WTC11 (cell line): ENCODE measurements at regions of chr9 and their contacts with region 1.

Region 1: DNA sequence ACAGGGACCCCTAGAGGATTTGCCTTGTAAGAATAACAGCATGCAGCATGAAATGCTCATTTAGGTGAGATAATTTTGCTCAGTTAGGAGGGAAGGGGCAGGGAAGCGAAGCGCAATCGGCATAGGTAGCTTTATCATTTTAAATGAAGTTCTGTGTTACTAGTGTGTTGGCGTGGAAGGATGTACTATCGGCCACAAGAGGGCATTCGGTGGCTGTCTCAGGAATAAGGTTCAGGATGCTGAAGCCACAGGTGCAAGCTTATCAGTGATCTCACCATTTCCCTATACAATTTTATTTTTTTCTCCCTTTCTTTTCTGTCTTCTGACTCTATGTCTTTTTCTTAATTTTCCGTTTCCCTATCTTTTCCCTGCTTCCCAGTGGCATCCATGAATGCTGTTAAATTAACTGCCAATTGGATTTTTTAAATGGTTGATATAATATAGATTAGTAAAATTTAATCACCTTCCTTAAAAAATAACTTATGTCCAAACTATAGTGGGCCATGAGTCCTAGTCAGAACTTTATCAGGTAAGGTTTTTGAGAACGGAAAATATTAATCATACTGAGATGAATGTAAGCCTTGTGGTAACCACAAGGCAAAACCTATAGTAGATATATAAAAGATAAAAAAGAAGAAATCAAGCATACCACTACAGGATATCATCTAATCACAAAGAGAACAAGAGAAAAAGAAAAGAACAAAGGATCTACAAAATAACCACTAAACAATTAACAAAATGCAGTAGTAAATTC is 1.2 kb upstream of the INSL6 start:
- DNase-seq: peak; percentile 56
- ATAC-seq: peak; percentile 88
- H3K4me3 Mint-ChIP-seq: no peak overlapping the region
- H3K27ac Mint-ChIP-seq: no peak overlapping the region
- H3K4me1 Mint-ChIP-seq: peaks cover 11% of the 10 kb centered on the region
- H3K27me3 Mint-ChIP-seq: no peaks in the 10 kb centered on the region; the same call in 1 of the 2 replicates
- CTCF ChIP-seq: peak; percentile 63

Region 2: DNA sequence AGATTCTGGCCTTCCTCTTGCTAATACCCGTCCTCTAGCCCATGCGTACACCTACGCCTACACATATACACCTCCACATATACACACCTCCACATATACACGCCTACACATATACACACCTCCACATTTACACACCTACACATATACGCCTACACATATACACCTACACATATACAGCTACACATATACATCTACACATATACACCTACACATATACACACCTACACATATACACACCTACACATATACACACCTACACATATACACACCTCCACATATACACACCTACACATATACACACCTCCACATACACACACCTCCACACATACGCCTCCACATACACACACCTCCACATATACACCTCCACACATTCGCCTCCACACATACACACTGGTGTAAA is 472.7 kb before region 1 on chr9:
- CTCF ChIA-PET with region 1: no interaction called
- POLR2A ChIA-PET with region 1: no interaction called
- DNase-seq: no peak
- ATAC-seq: no peak
- H3K4me3 Mint-ChIP-seq: no peak overlapping the region
- H3K27ac Mint-ChIP-seq: no peak overlapping the region; the same call in 1 of the 2 replicates
- H3K4me1 Mint-ChIP-seq: no peaks in the 10 kb centered on the region
- H3K27me3 Mint-ChIP-seq: no peaks in the 10 kb centered on the region
- CTCF ChIP-seq: no peak

Region 3: DNA sequence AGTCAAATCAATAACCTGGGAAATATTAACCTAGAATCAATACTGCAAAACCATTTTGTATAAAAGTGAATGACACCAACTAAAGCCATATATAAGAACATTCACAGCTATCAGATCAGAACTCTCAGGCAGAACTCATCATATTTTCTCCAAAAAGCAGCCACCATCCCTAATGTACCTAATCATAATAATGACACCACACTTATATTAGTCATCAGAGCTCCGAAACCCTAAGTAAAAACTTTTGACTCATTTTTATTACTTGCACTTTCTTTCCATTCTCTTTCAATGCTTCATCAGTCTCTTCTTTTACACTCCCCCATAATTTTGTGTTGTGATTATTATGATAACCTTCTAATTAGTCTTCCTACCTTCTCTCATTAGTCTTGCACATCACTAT is 46.4 kb before region 1 on chr9:
- CTCF ChIA-PET with region 1: no interaction called
- POLR2A ChIA-PET with region 1: no interaction called
- DNase-seq: no peak
- ATAC-seq: no peak
- H3K4me3 Mint-ChIP-seq: no peak overlapping the region
- H3K27ac Mint-ChIP-seq: no peak overlapping the region
- H3K4me1 Mint-ChIP-seq: no peaks in the 10 kb centered on the region
- H3K27me3 Mint-ChIP-seq: peaks cover 14% of the 10 kb centered on the region; the same call in 1 of the 2 replicates
- CTCF ChIP-seq: no peak

Region 4: GRCh38 chr9:5268890-5269715 is 82.5 kb after region 1 on chr9:
- CTCF ChIA-PET with region 1: interaction called, 10 read pairs
- POLR2A ChIA-PET with region 1: no interaction called
- DNase-seq: no peak
- ATAC-seq: peak; percentile 83
- H3K4me3 Mint-ChIP-seq: peak overlapping the region; percentile 18
- H3K27ac Mint-ChIP-seq: peak overlapping the region; percentile 95
- H3K4me1 Mint-ChIP-seq: peaks cover 29% of the 10 kb centered on the region
- H3K27me3 Mint-ChIP-seq: peaks cover 7% of the 10 kb centered on the region
- CTCF ChIP-seq: no peak

Region 5: DNA sequence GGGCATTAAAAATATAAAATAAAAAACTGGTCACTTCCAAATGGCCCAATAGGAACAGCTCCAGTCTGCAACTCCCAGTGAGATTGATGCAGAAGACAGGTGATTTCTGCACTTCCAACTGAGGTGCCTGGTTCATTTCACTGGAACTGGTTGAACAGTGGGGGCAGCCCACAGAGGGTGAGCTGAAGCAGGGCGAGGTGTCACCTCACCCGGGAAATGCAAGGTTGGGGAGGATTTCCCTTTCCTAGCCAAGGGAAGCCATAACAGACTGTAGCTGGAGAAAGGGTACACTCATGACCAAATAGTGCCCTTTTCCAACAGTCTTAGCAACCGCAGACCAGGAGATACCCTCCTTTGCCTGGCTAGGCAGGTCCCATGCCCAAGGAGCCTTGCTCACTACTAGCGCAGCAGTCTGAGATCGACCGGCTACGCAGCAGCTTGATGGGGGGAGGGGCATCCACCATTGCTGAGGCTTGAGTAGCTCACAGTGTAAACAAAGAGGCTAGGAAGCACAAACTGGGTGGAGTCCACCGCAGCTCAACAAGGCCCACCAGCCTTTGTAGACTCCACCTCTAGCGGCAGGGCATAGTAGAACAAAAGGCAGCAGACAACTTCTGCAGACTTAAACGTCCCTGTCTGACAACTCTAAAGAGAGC is 140.4 kb after region 1 on chr9:
- CTCF ChIA-PET with region 1: interaction called, 14 read pairs
- POLR2A ChIA-PET with region 1: no interaction called
- DNase-seq: peak; percentile 79
- ATAC-seq: peak; percentile 99
- H3K4me3 Mint-ChIP-seq: peak overlapping the region; percentile 39
- H3K27ac Mint-ChIP-seq: peak overlapping the region; percentile 53; the same call in 1 of the 2 replicates
- H3K4me1 Mint-ChIP-seq: peaks cover 17% of the 10 kb centered on the region
- H3K27me3 Mint-ChIP-seq: no peaks in the 10 kb centered on the region
- CTCF ChIP-seq: no peak

Region 6: GRCh38 chr9:5416962-5417361 is 230.4 kb after region 1 on chr9:
- CTCF ChIA-PET with region 1: no interaction called
- POLR2A ChIA-PET with region 1: no interaction called
- DNase-seq: no peak
- ATAC-seq: peak; percentile 48; the same call in 1 of the 2 replicates
- H3K4me3 Mint-ChIP-seq: no peak overlapping the region
- H3K27ac Mint-ChIP-seq: no peak overlapping the region
- H3K4me1 Mint-ChIP-seq: peaks cover 18% of the 10 kb centered on the region
- H3K27me3 Mint-ChIP-seq: peaks cover 12% of the 10 kb centered on the region
- CTCF ChIP-seq: no peak

Region 7: DNA sequence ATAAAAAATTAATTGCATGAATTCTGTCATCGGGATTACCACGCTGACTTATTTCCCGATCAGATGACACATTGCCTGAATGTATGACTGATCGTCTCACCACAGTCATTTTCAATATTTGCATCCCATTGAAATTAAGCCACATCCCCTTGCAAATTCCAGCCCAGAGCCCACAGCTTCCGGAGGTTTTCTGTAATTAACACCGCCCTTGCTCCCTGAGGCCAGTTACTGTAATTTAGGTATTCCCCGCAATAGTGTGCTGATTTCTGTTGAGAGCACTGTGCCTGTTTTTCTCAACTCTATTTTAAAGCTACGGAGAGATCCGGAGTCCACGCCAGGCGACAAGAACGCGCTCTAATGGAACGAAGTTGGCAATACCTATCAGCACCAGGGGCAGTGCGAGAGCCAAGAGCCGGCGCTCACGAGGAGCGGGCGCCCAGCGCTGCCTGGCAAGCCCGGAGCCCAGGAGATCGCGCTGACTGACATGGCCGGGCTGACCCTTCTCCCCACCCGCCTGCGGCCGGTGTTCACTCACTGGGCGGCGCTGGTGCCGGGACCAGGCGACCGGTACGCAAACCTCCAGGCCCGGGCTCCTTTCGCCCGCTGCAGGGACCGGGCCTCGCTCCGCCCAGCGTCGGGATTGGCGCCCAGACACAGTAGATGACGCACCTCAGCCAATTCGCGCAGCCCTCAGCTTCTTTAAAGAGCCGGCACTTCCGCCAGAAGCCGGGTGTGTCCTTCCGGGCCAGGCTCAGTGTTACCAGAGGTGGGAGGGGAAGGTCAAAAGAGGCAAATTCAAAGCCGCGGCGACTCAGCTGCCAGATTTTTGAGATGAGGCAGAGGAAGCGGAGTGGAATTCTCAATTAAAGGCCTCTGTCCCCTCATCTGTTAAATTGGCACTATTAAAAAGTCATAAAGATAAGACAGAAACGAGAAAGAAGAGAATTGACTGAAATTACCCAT is 250.9 kb after region 1 on chr9 and contains the start of gene PLGRKT:
- CTCF ChIA-PET with region 1: interaction called, 15 read pairs
- POLR2A ChIA-PET with region 1: no interaction called
- DNase-seq: peak; percentile 91
- ATAC-seq: peak; percentile 97
- H3K4me3 Mint-ChIP-seq: peak within 1 kb of the TSS; percentile 95
- H3K27ac Mint-ChIP-seq: peak within 1 kb of the TSS; percentile 97
- H3K4me1 Mint-ChIP-seq: peaks cover 24% of the 10 kb centered on the region
- H3K27me3 Mint-ChIP-seq: no peaks in the 10 kb centered on the region
- CTCF ChIP-seq: no peak
- total RNA-seq, gene PLGRKT: 19.2 to 26.3 TPM (median 25.0 TPM) in 3 replicates

Region 8: DNA sequence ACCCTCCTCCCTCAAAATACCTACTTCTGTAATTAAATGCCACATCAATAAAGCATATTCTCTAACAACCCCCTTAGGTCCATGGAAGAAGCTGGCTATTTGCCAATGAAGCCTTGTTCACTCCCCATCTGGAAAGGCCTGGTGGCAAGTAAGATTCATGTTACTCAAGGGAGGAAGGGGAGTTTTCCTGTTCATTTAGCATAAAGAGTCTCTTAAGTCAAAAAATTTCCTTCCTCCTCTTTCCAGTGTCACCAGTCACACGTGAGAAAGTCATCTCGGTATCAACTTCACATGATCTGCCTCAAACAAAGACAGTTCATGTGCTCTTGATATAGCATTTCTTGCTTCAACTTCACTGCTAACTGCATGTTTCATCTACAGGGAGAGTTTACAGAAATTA is 409.6 kb after region 1 on chr9:
- CTCF ChIA-PET with region 1: interaction called, 29 read pairs
- POLR2A ChIA-PET with region 1: no interaction called
- DNase-seq: no peak
- ATAC-seq: no peak
- H3K4me3 Mint-ChIP-seq: no peak overlapping the region
- H3K27ac Mint-ChIP-seq: no peak overlapping the region
- H3K4me1 Mint-ChIP-seq: no peaks in the 10 kb centered on the region
- H3K27me3 Mint-ChIP-seq: peaks cover 9% of the 10 kb centered on the region
- CTCF ChIP-seq: no peak